ENCODE measurements at regions of chr15 and their contacts with region 1.

Region 1: DNA sequence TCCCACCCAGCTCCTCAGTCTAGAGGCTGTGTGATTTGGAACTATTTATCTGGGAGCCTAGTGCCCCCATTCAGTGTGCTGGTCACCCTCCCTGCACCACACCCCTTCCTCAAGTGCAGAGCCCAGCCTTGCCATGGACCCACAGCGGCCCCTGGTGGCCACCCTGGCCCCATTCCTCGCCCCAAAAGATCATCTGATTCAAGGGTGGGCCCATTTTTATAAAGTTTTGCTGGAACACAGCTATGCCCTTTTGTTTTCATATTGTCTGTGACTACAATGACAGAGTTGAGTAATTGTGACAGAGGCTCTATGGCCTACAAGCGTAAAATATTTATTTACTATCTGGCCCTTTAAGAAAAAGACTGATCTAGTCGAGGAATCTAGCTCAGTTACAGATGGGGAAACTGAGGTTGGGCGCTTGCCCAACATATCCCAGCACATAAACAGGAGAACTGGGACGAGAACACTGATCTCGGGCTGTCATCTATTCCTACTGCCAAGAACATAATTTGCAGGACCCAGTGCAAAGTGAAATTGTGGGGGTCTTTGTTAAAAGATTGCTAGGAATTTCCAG is 1.8 kb downstream of the FES start:
- DNase-seq: peak; percentile 65 to 69 (median 66)
- H3K4me3 ChIP-seq: no peak overlapping the region
- H3K4me3 Mint-ChIP-seq: peak overlapping the region in 2 of 8 donors; percentile 52 to 77
- H3K27ac ChIP-seq: no peak overlapping the region
- H3K27ac Mint-ChIP-seq: peak overlapping the region in 3 of 7 donors; percentile 30 to 72 (median 60)
- H3K4me1 ChIP-seq: peaks cover 5% of the 10 kb centered on the region
- H3K4me1 Mint-ChIP-seq: peaks cover 2 to 17% (median 8%) of the 10 kb centered on the region in 4 donors
- H3K27me3 ChIP-seq: no peaks in the 10 kb centered on the region
- H3K27me3 Mint-ChIP-seq: peaks cover 5 to 9% of the 10 kb centered on the region in 2 donors

Region 2: DNA sequence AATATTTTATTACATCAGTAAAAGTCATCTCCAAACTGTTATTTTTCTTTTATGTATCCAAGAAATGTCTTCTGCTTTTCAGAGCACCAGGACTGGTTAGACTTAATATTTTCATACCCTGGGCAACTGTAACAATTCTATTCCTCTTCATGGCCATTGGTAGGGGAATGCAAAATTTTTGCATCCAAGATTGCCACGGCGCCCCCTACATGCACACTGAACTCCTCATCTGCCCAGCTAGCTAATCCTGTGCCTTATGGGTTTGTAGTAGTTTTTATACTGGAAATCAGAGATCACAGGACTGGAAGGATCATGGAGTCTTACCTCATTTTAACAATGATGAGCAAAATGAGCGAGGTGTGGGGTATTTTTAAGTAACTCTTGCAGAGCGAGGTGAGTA is 282.2 kb before region 1 on chr15:
- CTCF ChIA-PET with region 1: no interaction called
- POLR2A ChIA-PET with region 1: no interaction called
- intact Hi-C with region 1: no loop called
- DNase-seq: peak in 4 of 5 donors; percentile 22 to 35 (median 30)
- H3K4me3 ChIP-seq: no peak overlapping the region
- H3K4me3 Mint-ChIP-seq: no peak overlapping the region
- H3K27ac ChIP-seq: no peak overlapping the region
- H3K27ac Mint-ChIP-seq: peak overlapping the region in 5 of 7 donors; percentile 12 to 75 (median 60)
- H3K4me1 ChIP-seq: peaks cover 19% of the 10 kb centered on the region
- H3K4me1 Mint-ChIP-seq: peaks cover 9 to 41% (median 31%) of the 10 kb centered on the region in 4 donors
- H3K27me3 ChIP-seq: no peaks in the 10 kb centered on the region
- H3K27me3 Mint-ChIP-seq: no peaks in the 10 kb centered on the region

Region 3: GRCh38 chr15:90642464-90643300 is 243.4 kb before region 1 on chr15:
- CTCF ChIA-PET with region 1: interaction called, 118 read pairs
- POLR2A ChIA-PET with region 1: interaction called, 8 read pairs
- intact Hi-C with region 1: no loop called
- DNase-seq: no peak
- H3K4me3 ChIP-seq: no peak overlapping the region
- H3K4me3 Mint-ChIP-seq: no peak overlapping the region
- H3K27ac ChIP-seq: no peak overlapping the region
- H3K27ac Mint-ChIP-seq: peak overlapping the region in 2 of 7 donors; percentile 24 to 27
- H3K4me1 ChIP-seq: no peaks in the 10 kb centered on the region
- H3K4me1 Mint-ChIP-seq: peaks cover 0 to 8% (median 1%) of the 10 kb centered on the region in 4 donors
- H3K27me3 ChIP-seq: no peaks in the 10 kb centered on the region
- H3K27me3 Mint-ChIP-seq: no peaks in the 10 kb centered on the region

Region 4: DNA sequence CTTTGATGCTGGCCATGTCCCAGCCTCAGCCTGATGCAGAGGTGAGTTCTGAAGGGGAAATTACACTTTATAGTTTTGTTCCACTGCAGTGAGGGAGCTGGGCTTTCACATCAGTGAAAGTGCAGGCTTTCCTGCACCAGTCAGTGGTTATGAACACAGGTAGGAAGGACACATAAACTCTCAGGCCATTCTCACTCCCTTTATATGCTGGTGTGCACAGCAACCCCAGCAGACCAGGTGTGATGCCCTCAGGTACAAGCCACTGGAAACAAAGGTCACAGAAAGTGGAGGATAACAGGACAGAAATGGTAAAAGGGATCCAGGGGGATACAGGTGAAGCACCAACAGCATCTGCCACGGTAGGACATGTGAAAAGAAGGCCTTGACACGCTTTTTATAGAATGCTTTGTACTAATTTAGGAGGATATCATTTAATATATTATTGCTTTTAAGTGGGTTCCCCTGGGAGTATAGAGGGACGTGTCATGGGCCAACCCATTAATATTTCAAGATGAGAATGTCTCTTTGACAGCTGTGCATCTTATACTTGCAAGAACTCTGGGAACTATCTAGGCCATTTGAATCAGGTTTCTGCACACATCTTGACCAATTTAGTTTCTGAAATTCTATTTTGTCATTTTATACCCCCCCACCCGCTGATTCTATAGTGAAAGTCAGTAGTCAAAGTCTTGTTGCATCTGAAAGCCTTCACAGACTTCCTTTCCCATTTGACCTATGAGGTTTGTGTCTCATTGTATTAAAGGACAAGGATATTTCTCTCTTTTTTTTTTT is 193.9 kb before region 1 on chr15:
- CTCF ChIA-PET with region 1: interaction called, 7 read pairs
- POLR2A ChIA-PET with region 1: no interaction called
- intact Hi-C with region 1: loop called (anchors 1 kb)
- DNase-seq: no peak
- H3K4me3 ChIP-seq: no peak overlapping the region
- H3K4me3 Mint-ChIP-seq: no peak overlapping the region
- H3K27ac ChIP-seq: no peak overlapping the region
- H3K27ac Mint-ChIP-seq: no peak overlapping the region
- H3K4me1 ChIP-seq: no peaks in the 10 kb centered on the region
- H3K4me1 Mint-ChIP-seq: peaks cover 0 to 3% (median under 1%) of the 10 kb centered on the region in 4 donors
- H3K27me3 ChIP-seq: no peaks in the 10 kb centered on the region
- H3K27me3 Mint-ChIP-seq: no peaks in the 10 kb centered on the region

Region 5: GRCh38 chr15:90762109-90762508 is 124.0 kb before region 1 on chr15:
- CTCF ChIA-PET with region 1: interaction called, 10 read pairs
- POLR2A ChIA-PET with region 1: no interaction called
- intact Hi-C with region 1: no loop called
- DNase-seq: no peak
- H3K4me3 ChIP-seq: no peak overlapping the region
- H3K4me3 Mint-ChIP-seq: no peak overlapping the region
- H3K27ac ChIP-seq: no peak overlapping the region
- H3K27ac Mint-ChIP-seq: peak overlapping the region in 1 of 7 donors; percentile 34
- H3K4me1 ChIP-seq: no peaks in the 10 kb centered on the region
- H3K4me1 Mint-ChIP-seq: peaks cover 0 to 5% (median 0%) of the 10 kb centered on the region in 4 donors
- H3K27me3 ChIP-seq: no peaks in the 10 kb centered on the region
- H3K27me3 Mint-ChIP-seq: no peaks in the 10 kb centered on the region

Region 6: GRCh38 chr15:90839187-90840071 is 46.7 kb before region 1 on chr15:
- CTCF ChIA-PET with region 1: interaction called, 11 read pairs
- POLR2A ChIA-PET with region 1: no interaction called
- intact Hi-C with region 1: no loop called
- DNase-seq: no peak
- H3K4me3 ChIP-seq: no peak overlapping the region
- H3K4me3 Mint-ChIP-seq: peak overlapping the region in 7 of 8 donors; percentile 17 to 82 (median 43)
- H3K27ac ChIP-seq: peak overlapping the region; percentile 7
- H3K27ac Mint-ChIP-seq: peak overlapping the region; percentile 41 to 98 (median 96)
- H3K4me1 ChIP-seq: peaks cover 33% of the 10 kb centered on the region
- H3K4me1 Mint-ChIP-seq: peaks cover 9 to 30% (median 20%) of the 10 kb centered on the region in 4 donors
- H3K27me3 ChIP-seq: no peaks in the 10 kb centered on the region
- H3K27me3 Mint-ChIP-seq: peaks cover 1% of the 10 kb centered on the region in 2 donors

Region 7: GRCh38 chr15:90970274-90970673 is 84.1 kb after region 1 on chr15:
- CTCF ChIA-PET with region 1: no interaction called
- POLR2A ChIA-PET with region 1: no interaction called
- intact Hi-C with region 1: no loop called
- DNase-seq: no peak
- H3K4me3 ChIP-seq: no peak overlapping the region
- H3K4me3 Mint-ChIP-seq: no peak overlapping the region
- H3K27ac ChIP-seq: no peak overlapping the region
- H3K27ac Mint-ChIP-seq: no peak overlapping the region
- H3K4me1 ChIP-seq: no peaks in the 10 kb centered on the region
- H3K4me1 Mint-ChIP-seq: no peaks in the 10 kb centered on the region
- H3K27me3 ChIP-seq: no peaks in the 10 kb centered on the region
- H3K27me3 Mint-ChIP-seq: no peaks in the 10 kb centered on the region